Ovary (tissue), 10 donors: ENCODE measurements at regions of chr9 and their contacts with region 1.

Region 1: GRCh38 chr9:91036826-91037510 is 235.3 kb downstream of the SYK start:
- DNase-seq: peak; percentile 73 to 83 (median 77)
- H3K4me3 ChIP-seq: no peak overlapping the region
- H3K27ac ChIP-seq: peak overlapping the region in 1 of 2 donors; percentile 8
- H3K4me1 ChIP-seq: peaks cover 18% of the 10 kb centered on the region
- H3K27me3 ChIP-seq: no peaks in the 10 kb centered on the region
- CTCF ChIP-seq: peak in 2 of 3 donors; percentile 50 to 55
- EP300 ChIP-seq: no peak
- POLR2A ChIP-seq: no peak

Region 2: DNA sequence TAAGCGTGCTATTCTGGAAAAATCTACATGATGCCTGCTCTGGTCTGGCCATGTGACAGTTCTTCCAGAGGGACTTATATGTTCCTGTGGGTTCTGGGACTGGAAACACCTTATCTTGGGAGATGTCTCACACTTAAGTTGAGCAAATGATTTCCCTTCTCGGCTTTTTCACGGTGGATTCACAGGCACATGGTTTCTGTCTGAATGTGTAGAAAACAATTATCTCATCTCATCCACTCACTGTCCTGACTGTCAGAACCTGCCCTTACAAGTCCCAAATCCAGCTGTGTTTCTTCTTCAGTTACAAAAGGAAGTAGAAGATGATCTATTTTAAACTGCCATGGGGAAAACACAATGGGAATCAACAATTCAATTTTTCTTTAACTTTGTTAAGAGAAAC is 51.3 kb before region 1 on chr9:
- intact Hi-C with region 1: loop called in 1 of 4 experiments (anchors 1 kb)
- DNase-seq: no peak
- H3K4me3 ChIP-seq: no peak overlapping the region
- H3K27ac ChIP-seq: no peak overlapping the region
- H3K4me1 ChIP-seq: no peaks in the 10 kb centered on the region
- H3K27me3 ChIP-seq: no peaks in the 10 kb centered on the region
- CTCF ChIP-seq: no peak
- EP300 ChIP-seq: no peak
- POLR2A ChIP-seq: no peak

Region 3: GRCh38 chr9:91433180-91433579 is 396.2 kb after region 1 on chr9:
- intact Hi-C with region 1: loop called (anchors 5 to 10 kb)
- DNase-seq: no peak
- H3K4me3 ChIP-seq: no peak overlapping the region
- H3K27ac ChIP-seq: no peak overlapping the region
- H3K4me1 ChIP-seq: no peaks in the 10 kb centered on the region
- H3K27me3 ChIP-seq: no peaks in the 10 kb centered on the region
- CTCF ChIP-seq: peak in 2 of 3 donors; percentile 28 to 55
- EP300 ChIP-seq: no peak
- POLR2A ChIP-seq: no peak